ENCODE measurements at regions of chr1 and their contacts with region 1.

Region 1: DNA sequence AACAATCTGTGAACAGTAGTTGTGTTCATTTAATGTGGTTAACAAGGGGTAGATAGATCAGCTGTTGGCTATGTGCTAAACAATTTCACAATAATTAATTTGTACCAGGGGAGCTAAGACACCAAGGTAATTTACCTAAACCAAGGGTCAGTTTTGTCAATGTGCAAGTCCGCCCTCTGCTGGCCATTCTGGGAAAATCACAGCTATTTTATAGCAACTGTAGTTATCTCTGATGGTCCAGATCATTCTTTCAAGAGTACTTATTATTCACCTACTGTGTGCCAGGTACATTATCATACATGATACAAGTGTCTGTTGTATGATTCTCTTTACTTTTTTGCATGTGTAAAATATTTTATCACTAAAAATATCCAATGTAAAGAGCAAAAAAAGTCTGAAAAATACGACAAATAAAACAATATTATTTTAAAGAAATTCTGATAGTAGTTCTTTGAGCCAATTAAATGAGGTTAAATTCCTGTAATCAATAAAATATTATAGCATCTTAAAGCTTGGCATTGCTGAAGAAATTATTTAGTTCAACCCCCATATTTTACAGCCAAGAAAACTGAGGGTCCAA is 312.3 kb upstream of the FAM78B start:
- DNase-seq: no peak
- ATAC-seq: peak; percentile 76
- H3K4me3 ChIP-seq: no peak overlapping the region
- H3K27ac ChIP-seq: no peak overlapping the region
- H3K4me1 ChIP-seq: no peaks in the 10 kb centered on the region
- H3K27me3 ChIP-seq: no peaks in the 10 kb centered on the region; a peak in 1 of 4 replicates
- CTCF ChIP-seq: peak; percentile 65 to 81 (median 71)
- EP300 ChIP-seq: no peak
- POLR2A ChIP-seq: no peak
- RAD21 ChIP-seq: peak; percentile 67

Region 2: DNA sequence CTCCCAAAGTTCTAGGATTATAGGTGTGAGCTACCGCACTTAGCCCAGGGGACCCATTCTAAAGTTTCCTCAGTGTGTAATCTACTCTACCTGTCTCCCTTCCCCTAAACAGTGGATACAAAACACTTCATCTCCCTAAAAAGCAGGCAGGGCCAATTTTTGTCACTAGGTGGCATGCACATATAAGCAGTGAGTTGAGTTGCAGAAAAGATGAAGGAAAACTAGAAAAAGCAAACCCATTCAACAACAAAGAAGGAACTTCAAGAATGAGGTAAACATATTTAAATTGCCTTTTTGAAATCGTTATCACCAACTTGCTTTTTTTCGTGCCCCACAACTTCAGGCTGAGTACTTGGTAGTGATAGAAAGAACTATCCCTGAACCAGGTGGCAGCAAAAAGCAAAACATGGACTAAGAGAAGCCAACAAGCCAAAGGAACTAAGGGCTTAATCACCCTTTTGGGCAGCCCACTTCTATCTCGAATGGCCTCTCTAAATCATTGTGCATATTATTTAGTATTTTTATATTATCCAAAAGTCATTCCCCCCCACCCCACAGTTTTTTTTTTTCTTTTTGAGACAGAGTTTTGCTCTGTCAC is 761.1 kb before region 1 on chr1:
- CTCF ChIA-PET with region 1: no interaction called
- POLR2A ChIA-PET with region 1: no interaction called
- RAD21 ChIA-PET with region 1: no interaction called
- SMC1A ChIA-PET with region 1: no interaction called
- in situ Hi-C with region 1: loop called (anchors 25 kb)
- intact Hi-C with region 1: loop called (anchors 10 kb)
- DNase-seq: no peak
- ATAC-seq: peak; percentile 88
- H3K4me3 ChIP-seq: no peak overlapping the region
- H3K27ac ChIP-seq: no peak overlapping the region
- H3K4me1 ChIP-seq: no peaks in the 10 kb centered on the region
- H3K27me3 ChIP-seq: no peaks in the 10 kb centered on the region
- CTCF ChIP-seq: peak; percentile 73 to 84 (median 82)
- EP300 ChIP-seq: no peak
- POLR2A ChIP-seq: no peak
- RAD21 ChIP-seq: peak; percentile 99

Region 3: DNA sequence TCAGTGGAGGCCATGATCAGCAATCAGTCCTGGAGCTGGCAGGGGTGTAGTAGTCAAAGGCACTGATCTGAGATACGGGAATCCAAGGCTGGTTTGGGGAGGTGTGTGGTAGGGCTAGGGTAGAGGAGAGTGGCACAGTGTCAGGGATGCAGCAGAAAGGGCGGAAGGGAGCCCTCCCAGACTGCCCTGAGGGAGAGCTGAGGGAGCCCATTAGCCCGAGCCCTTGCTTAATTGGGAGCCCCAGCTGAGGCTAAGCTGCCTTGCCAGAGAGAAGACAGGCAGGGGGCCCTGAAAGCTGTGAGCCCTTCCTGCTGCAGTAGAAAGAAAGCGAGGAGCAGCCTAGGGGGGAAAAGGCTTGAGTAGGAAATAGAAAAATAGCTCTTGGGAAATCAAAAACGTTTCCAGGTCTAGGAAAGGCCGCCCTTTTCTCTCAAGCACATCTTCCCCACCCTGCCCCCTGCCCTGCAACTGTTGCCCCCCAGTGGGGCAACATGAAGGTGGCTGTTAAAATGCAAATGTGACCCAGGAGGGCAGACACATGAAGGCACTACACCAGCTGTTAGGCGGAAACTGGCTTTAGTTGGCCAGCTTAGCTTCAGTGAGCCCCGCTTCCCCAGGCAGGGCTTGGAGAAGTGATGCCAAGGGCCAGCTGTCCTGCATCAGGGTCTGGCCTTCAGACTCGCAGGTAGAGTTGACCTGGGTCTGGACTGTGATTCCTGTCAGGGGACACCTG is 545.5 kb before region 1 on chr1:
- CTCF ChIA-PET with region 1: interaction called, 192 read pairs
- POLR2A ChIA-PET with region 1: no interaction called
- RAD21 ChIA-PET with region 1: interaction called, 15 read pairs
- SMC1A ChIA-PET with region 1: interaction called, 25 read pairs
- in situ Hi-C with region 1: loop called (anchors 5 kb)
- intact Hi-C with region 1: loop called (anchors 1 kb)
- DNase-seq: no peak
- ATAC-seq: peak; percentile 30; the same call in 2 of the 3 replicates
- H3K4me3 ChIP-seq: no peak overlapping the region
- H3K27ac ChIP-seq: no peak overlapping the region
- H3K4me1 ChIP-seq: no peaks in the 10 kb centered on the region
- H3K27me3 ChIP-seq: no peaks in the 10 kb centered on the region
- CTCF ChIP-seq: no peak
- EP300 ChIP-seq: no peak
- POLR2A ChIP-seq: no peak
- RAD21 ChIP-seq: no peak

Region 4: DNA sequence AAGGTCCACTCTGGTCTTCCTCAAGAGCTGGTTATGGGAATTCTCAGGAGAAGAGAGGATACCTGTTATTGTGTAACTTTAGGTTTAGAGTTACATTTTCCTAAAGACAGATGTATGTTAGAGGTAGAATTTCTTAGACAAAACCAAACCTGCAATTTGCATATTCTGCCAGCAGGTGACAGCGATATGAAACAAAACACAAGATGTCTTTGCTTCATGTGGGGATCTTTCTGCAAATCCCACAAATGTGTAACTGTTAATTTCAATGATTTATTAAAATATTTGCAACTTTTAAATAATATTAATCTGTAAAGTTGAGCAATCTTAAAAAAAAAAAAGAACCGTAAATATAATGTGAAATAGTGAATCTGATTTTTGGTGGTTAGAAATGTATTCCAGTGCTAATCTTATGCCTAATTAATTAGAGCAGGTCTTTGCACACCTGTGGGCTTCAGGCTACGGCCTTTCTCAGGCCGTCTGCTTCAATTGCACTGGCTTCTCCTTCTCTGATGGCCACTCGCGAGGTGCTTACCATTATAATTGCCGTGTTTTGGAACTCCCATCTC is 345.8 kb before region 1 on chr1:
- CTCF ChIA-PET with region 1: interaction called, 17 read pairs
- POLR2A ChIA-PET with region 1: no interaction called
- RAD21 ChIA-PET with region 1: interaction called, 4 read pairs
- SMC1A ChIA-PET with region 1: interaction called, 9 read pairs
- in situ Hi-C with region 1: no loop called
- intact Hi-C with region 1: loop called (anchors 5 kb)
- DNase-seq: no peak
- ATAC-seq: peak; percentile 60; the same call in 2 of the 3 replicates
- H3K4me3 ChIP-seq: no peak overlapping the region
- H3K27ac ChIP-seq: no peak overlapping the region
- H3K4me1 ChIP-seq: no peaks in the 10 kb centered on the region
- H3K27me3 ChIP-seq: no peaks in the 10 kb centered on the region
- CTCF ChIP-seq: peak; percentile 34 to 53 (median 52)
- EP300 ChIP-seq: no peak
- POLR2A ChIP-seq: no peak
- RAD21 ChIP-seq: peak; percentile 43

Region 5: GRCh38 chr1:166489670-166490436 is 10.7 kb after region 1 on chr1:
- CTCF ChIA-PET with region 1: interaction called, 50 read pairs
- POLR2A ChIA-PET with region 1: interaction called, 4 read pairs
- RAD21 ChIA-PET with region 1: interaction called, 8 read pairs
- SMC1A ChIA-PET with region 1: interaction called, 6 read pairs
- in situ Hi-C with region 1: no loop called
- intact Hi-C with region 1: no loop called
- DNase-seq: peak; percentile 60
- ATAC-seq: peak; percentile 85
- H3K4me3 ChIP-seq: peak overlapping the region; percentile 51
- H3K27ac ChIP-seq: peak overlapping the region; percentile 74
- H3K4me1 ChIP-seq: no peaks in the 10 kb centered on the region
- H3K27me3 ChIP-seq: no peaks in the 10 kb centered on the region
- CTCF ChIP-seq: no peak
- EP300 ChIP-seq: no peak
- POLR2A ChIP-seq: peak; percentile 43; the same call in 1 of the 2 replicates
- RAD21 ChIP-seq: no peak

Measured in GM12878 (cell line).